ENCODE measurements at regions of chr21 and their contacts with region 1.

Region 1: DNA sequence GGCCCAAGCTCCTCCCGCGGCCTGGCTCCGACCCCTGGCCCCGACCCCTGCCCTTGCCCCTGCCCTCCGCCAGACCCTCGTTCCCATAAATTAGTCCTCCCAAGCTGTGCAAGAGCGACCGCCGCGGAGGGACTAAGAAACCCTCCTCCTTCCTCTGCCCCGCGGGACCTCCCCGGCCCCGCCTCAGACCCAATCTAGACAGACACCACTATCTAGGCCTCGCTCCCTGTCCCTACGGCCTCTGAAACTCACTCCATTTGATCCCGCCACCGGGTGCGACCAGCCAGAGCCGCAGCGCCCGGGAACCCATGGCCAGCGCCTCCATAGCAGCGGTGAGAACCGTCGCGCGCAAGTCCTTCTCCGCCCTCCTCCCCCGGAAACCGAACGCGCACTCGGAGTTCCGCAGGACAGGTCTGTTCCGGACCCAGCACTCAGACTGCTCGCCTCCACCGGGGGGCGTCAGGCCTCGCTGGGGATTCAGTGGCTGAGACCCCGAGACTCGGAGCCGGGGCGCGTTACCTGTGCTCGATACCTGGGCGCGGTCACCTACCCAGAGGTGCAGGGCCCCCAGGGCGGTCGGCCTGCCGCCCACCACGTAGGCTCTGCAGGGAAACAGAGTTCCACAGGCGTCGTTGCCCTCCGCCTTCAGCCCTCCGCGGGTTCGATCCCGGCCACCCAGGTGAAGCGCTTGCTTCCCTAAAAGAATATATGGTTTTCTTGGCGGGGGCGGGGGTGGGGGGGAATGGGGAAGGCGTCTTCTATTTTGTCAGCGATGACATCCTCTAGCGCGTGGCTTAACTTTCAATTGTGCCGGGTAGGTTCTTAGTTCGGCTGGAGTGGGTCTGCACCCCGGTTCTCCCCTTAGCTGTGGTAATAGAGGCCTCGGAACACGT is at the start of gene MRPL39:
- DNase-seq: peak; percentile 92
- ATAC-seq: peak; percentile 98
- total RNA-seq, gene MRPL39: 18.1 TPM

Region 2: GRCh38 chr21:25708467-25709065 is 101.2 kb after region 1 on chr21:
- intact Hi-C with region 1: loop called (anchors 5 kb)
- DNase-seq: peak; percentile 67
- ATAC-seq: peak; percentile 22

Measured in sciatic nerve (tissue), 2 donors.